Ascending aorta (tissue), 2 donors: ENCODE measurements at regions of chr5 and their contacts with region 1.

Region 1: DNA sequence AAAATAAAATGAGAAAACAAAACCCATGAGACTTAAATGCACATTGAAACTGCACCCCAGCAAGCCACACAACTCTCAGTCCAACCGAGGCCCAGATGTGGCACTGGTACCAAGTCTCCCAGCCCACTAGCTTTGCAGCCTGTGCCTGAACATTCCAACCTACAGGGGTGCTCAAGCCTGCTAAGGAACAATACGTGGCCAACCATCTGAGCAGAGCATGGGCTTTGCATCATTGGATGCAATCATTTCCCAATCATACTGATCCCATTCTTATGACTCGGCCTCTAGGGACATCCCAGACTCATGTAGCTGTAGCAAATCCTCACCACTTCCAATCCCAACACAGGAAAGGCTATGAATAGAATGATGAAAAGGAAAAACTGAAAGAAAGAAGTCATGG is 297.2 kb downstream of the SPOCK1 start:
- DNase-seq: peak in 1 of 2 donors; percentile 85
- H3K4me3 ChIP-seq: no peak overlapping the region
- H3K27ac ChIP-seq: no peak overlapping the region
- H3K4me1 ChIP-seq: no peaks in the 10 kb centered on the region
- H3K27me3 ChIP-seq: no peaks in the 10 kb centered on the region
- CTCF ChIP-seq: peak; percentile 30 to 44 (median 35)

Region 2: GRCh38 chr5:137075163-137075970 is 126.5 kb before region 1 on chr5:
- intact Hi-C with region 1: loop called (anchors 5 kb)
- DNase-seq: no peak
- H3K4me3 ChIP-seq: no peak overlapping the region
- H3K27ac ChIP-seq: no peak overlapping the region
- H3K4me1 ChIP-seq: peaks cover 3 to 13% of the 10 kb centered on the region in 2 donors
- H3K27me3 ChIP-seq: no peaks in the 10 kb centered on the region
- CTCF ChIP-seq: no peak

Region 3: DNA sequence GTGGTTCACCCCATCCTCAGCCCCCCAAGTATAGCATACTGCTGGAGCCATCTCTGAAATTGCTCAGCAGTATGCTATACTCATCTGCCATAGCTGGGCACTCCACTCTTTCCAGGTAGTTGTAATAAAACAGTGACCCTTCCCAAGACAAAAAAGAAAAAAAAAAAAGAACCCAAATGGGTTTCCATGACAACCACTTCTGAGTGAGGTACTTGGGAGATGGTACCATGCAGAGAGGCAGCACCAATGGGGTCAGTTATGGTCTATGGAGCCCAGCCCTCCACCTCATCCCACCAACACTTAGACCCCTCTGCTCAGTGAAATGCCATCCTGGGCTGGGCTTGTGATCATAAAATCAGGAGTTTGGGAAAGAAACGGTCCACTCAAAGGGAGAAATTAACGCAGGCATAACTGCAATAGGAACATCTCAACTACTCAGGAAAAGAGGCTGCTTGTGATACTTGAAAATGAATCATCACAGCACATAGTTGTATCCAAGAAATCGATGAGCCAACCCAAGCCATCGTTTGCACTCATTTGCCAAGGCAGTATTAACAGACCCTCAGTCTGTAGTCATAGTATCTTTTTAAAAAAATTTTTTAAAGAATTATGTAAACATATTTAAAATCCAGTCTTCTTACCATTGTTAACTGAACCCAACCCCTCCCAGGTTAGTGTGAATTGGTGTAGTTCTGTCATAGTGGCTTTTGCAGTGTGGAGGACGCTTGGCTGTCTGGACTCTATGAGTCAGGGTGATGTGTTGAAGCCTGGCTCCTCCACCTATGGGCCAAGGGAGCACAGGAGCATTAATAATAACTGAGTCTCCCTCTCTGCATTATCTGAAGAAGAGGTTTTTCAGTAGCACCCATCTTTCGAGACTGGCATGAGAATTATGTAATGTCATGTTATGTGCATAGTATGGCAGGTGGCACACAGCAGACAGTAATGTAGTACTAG is 105.5 kb before region 1 on chr5:
- intact Hi-C with region 1: no loop called
- DNase-seq: no peak
- H3K4me3 ChIP-seq: no peak overlapping the region
- H3K27ac ChIP-seq: no peak overlapping the region
- H3K4me1 ChIP-seq: peaks cover 0 to 5% of the 10 kb centered on the region in 2 donors
- H3K27me3 ChIP-seq: no peaks in the 10 kb centered on the region
- CTCF ChIP-seq: no peak

Region 4: DNA sequence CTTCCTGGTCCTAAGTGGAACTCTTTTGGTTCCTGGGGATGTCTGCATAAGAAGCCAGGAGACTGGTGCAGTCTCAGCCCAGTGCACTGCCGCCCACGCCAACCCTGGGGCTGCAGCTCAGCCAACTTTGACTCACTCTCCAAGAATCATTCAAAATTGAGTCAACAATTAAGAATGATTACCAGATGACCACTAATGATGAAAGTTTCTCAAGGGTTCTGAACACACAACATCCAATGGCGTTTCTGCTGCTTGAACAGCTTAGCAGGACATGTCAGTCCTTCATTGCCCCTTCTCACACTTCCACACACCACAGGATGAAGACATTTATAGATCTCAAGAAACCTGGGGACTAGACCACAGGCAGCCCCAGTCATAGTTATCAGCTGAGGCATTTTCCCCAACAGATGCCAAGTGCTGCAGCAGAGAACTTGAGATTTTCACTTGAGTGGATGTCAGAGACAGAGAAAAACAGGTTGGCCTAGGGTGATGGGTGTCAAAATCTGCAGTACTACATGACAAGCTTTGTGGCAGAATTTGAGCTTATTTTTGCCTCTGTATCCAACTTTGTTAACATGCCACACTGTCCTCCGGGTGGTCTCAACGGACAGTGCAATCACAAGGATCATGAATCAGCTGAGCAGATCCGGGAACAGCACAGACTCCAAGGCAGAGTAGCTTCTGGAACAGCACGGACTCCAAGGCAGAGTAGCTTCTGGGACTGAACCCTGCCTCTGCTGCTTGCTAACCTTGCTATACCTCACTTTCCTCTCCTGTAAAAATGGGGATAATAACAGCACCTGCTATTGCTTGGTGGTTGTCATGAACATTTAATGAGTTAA is 58.9 kb before region 1 on chr5:
- intact Hi-C with region 1: loop called (anchors 2 kb)
- DNase-seq: peak in 1 of 2 donors; percentile 85
- H3K4me3 ChIP-seq: no peak overlapping the region
- H3K27ac ChIP-seq: peak overlapping the region; percentile 46 to 73
- H3K4me1 ChIP-seq: peaks cover 6 to 34% of the 10 kb centered on the region in 2 donors
- H3K27me3 ChIP-seq: no peaks in the 10 kb centered on the region
- CTCF ChIP-seq: no peak

Region 5: GRCh38 chr5:137735555-137736284 is 533.8 kb after region 1 on chr5 and contains the start of gene KLHL3:
- intact Hi-C with region 1: loop called (anchors 10 kb)
- DNase-seq: peak in 1 of 2 donors; percentile 70
- H3K4me3 ChIP-seq: peak within 1 kb of the TSS; percentile 52 to 66
- H3K27ac ChIP-seq: peak within 1 kb of the TSS; percentile 39 to 55
- H3K4me1 ChIP-seq: peaks cover 0 to 7% of the 10 kb centered on the region in 2 donors
- H3K27me3 ChIP-seq: no peaks in the 10 kb centered on the region
- CTCF ChIP-seq: peak in 1 of 3 experiments; percentile 25
- total RNA-seq, gene KLHL3: 7.5 TPM